Adrenal gland (tissue), 19 donors: ENCODE measurements at regions of chr16 and their contacts with region 1.

Region 1: GRCh38 chr16:81730090-81731051 is 48.7 kb upstream of the PLCG2 start:
- DNase-seq: peak; percentile 79 to 92 (median 85)
- H3K4me3 ChIP-seq: peak overlapping the region in 1 of 4 donors; percentile 36
- H3K27ac ChIP-seq: peak overlapping the region in 2 of 5 donors; percentile 52 to 77
- H3K4me1 ChIP-seq: peaks cover 0 to 10% of the 10 kb centered on the region in 2 donors
- H3K27me3 ChIP-seq: no peaks in the 10 kb centered on the region
- CTCF ChIP-seq: peak; percentile 30 to 62 (median 49)
- POLR2A ChIP-seq: no peak

Region 2: GRCh38 chr16:81360135-81360534 is 370.2 kb before region 1 on chr16:
- intact Hi-C with region 1: loop called (anchors 5 to 10 kb)
- DNase-seq: no peak
- H3K4me3 ChIP-seq: no peak overlapping the region
- H3K27ac ChIP-seq: no peak overlapping the region
- H3K4me1 ChIP-seq: peaks cover 0 to 5% of the 10 kb centered on the region in 2 donors
- H3K27me3 ChIP-seq: no peaks in the 10 kb centered on the region
- CTCF ChIP-seq: no peak
- POLR2A ChIP-seq: no peak

Region 3: DNA sequence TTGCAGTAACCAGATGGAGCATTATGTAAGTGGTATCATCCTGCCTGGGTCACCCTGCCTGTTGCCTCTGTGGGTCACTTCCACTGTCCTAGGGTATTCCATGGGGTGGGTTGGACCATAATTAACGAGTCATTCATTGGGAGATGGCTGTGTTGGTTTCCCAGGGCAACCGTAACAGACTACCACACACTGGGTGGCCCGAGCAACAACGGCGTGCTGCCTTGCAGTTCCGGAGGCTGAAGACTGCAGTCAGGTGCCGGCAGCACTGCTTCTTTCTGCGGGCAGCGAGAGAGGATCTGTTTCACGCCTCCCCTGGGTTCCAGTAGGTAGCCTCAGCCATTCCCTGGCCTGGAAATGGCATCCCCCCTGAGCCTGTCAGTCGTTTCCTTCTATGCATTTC is 314.6 kb before region 1 on chr16:
- intact Hi-C with region 1: no loop called
- DNase-seq: no peak
- H3K4me3 ChIP-seq: no peak overlapping the region
- H3K27ac ChIP-seq: no peak overlapping the region
- H3K4me1 ChIP-seq: no peaks in the 10 kb centered on the region
- H3K27me3 ChIP-seq: no peaks in the 10 kb centered on the region
- CTCF ChIP-seq: no peak
- POLR2A ChIP-seq: no peak

Region 4: GRCh38 chr16:81632392-81633146 is 97.8 kb before region 1 on chr16:
- intact Hi-C with region 1: no loop called
- DNase-seq: peak; percentile 75 to 92 (median 91)
- H3K4me3 ChIP-seq: no peak overlapping the region
- H3K27ac ChIP-seq: peak overlapping the region in 4 of 5 donors; percentile 77 to 92 (median 88)
- H3K4me1 ChIP-seq: peaks cover 14 to 25% of the 10 kb centered on the region in 2 donors
- H3K27me3 ChIP-seq: no peaks in the 10 kb centered on the region
- CTCF ChIP-seq: no peak
- POLR2A ChIP-seq: peak in 1 of 2 donors; percentile 18